Heart left ventricle (tissue), 16 donors: ENCODE measurements at regions of chr17 and their contacts with region 1.

Region 1: DNA sequence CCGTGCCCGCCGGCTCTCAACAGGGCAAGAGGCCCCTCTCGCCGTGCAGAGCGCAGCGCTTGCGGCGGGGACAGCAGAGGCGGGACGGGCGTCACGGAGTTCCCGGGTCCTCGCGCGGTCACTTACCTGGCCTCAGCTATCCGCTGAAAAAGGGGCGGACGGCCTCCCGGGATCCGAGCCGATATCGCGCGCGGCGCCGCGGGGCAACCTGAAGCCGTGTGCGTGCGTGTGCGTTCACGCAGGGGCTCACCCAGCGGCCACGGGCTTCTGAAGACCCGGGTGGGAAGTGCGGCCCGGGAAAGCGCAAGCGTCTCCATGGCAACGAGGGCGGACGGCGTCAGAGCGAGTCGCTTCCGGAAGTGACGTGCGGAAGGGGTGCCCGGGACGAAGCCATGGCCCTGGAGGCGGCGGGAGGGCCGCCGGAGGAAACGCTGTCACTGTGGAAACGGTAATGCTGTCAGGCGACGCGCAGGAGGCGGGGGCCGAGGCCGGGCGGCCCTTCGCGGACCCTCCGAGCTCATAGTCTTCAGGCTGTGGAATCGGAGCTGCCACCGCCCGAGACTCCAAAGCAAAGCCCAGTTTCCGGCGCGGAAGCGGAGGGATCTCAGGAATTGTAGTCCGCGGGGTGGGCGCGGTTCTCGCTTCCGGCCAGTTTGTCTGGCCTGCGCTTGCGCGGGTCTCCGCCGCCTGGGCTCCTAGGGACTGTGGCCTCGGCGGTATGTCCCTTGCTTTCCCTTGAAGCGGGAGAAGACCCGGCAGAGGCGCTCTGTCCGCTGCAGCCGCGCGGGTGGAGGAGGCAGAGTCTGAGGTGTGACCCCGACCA is at the start of gene ENDOV:
- DNase-seq: peak; percentile 96 to 97 (median 97)
- ATAC-seq: peak; percentile 95 to 98 (median 96)
- H3K4me3 ChIP-seq: peak within 1 kb of the TSS; percentile 52 to 97 (median 82)
- H3K27ac ChIP-seq: peak within 1 kb of the TSS; percentile 88 to 99 (median 96)
- H3K4me1 ChIP-seq: peaks cover 0 to 32% (median 18%) of the 10 kb centered on the region in 12 donors
- H3K27me3 ChIP-seq: no peaks in the 10 kb centered on the region
- CTCF ChIP-seq: no peak
- POLR2A ChIP-seq: peak in 1 of 2 donors; percentile 68
- total RNA-seq, gene ENDOV: 4.2 to 16.2 (median 11.2) TPM

Region 2: DNA sequence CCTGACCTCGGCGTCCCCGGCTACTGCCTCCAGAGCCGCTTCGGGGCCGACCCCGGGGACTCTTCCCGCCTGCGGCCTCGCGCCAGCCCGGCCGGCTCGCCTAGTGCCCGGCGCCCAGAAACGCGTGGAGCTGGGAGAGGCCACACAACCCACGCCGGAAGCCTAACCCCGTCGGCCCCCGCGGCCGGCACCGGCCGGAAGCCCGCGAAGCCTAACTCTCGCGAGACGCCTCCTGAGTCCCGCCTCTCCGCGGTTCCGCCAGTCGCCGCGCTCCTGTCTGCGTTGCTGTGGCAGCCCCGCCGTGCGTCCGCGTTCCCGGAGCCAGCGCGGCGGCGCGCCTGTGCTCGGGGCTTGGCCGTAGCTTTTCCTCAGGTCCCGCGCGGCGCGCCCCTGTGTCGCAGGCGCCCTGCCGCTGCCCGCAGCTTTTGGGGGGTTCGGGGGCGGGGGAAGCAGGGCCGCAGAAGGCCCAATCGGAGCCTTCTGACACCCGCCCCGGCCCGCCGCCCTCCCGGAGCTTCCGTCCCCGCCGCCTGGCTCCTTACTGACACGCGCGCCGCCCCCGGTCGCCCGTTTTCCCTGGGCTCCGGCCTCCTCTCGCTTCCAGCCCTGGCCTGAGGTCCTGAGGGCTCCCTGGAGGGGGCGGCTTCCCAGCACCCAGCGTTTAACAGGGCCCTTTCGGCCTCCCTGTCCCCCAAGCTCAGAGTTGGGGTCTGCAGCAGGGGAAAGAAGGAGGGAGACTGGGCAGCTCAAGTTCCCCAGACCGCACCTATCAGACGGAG is 39.7 kb after region 1 on chr17:
- intact Hi-C with region 1: loop called in 1 of 10 experiments (anchors 1 kb)
- DNase-seq: peak; percentile 97 to 99 (median 98)
- ATAC-seq: peak; percentile 93 to 97 (median 96)
- H3K4me3 ChIP-seq: peak overlapping the region; percentile 43 to 88 (median 72)
- H3K27ac ChIP-seq: peak overlapping the region; percentile 88 to 99 (median 96)
- H3K4me1 ChIP-seq: peaks cover 0 to 36% (median 22%) of the 10 kb centered on the region in 12 donors
- H3K27me3 ChIP-seq: no peaks in the 10 kb centered on the region
- CTCF ChIP-seq: no peak
- POLR2A ChIP-seq: peak in 1 of 2 donors; percentile 93

Region 3: DNA sequence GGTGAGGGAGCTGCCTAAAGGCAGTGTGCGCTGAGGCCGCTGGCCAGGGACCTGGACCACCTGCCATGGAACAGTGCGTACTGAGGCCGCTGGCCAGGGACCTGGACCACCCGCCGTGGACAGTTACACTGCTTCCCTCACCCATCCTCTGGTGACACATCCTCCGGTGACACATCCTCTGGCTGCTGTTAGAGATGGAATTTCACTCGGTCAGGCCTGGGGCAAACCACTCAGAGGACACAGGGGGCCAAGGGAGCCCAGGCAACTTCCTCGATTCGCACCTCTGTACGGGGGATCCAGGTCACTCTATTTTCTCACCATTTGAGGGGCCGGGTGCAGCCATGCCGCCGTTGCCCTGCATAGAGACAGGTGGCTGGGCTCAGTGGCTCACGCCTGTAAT is 97.2 kb after region 1 on chr17:
- intact Hi-C with region 1: no loop called
- DNase-seq: no peak
- ATAC-seq: no peak
- H3K4me3 ChIP-seq: no peak overlapping the region
- H3K27ac ChIP-seq: no peak overlapping the region
- H3K4me1 ChIP-seq: peaks cover 0 to 3% (median 0%) of the 10 kb centered on the region in 12 donors
- H3K27me3 ChIP-seq: peaks cover 0 to 35% (median 7%) of the 10 kb centered on the region in 9 donors
- CTCF ChIP-seq: no peak
- POLR2A ChIP-seq: no peak